ENCODE measurements at regions of chr3 and their contacts with region 1.

Region 1: DNA sequence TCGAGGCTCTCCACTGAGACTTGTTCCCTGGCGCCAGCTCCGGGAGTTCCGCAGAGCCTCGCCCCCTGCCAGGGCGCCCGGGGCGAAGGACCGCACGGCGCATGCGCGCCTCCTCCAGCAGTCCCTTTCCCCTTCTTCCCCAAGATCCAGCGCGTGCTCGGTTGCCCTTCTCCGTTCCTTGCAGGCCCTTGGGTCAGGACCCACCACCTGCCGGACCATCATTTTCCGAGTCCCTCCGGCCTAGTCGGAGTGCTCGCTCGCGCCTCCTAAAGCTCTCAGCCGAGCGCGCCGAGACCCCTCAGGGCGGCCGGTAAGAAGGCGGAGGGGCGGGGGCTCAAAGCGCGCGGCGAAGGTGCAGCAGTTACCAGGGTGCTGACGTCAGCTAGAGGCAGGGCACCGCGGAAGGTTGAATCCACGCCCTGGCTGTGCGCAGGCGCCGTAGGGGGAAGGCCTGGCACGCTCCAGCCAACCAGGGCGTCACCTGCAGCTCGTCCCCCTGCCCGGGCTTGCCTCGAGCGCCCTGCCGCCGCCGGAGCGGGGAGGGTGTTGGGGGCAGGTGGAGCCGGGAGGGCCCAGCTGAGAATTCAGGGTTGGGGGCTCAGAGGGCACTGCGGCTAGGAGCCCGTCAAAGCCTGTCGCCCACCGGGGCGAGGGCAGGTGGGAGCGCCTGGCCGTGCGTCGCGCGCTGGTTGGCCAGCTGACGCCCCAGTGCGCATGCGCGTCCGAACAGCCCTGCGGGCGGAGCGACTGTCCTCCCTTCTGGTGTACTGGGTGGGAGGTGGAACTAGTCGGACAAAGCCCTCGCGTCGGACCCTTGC is at the start of gene TCAIM:
- DNase-seq: peak; percentile 99
- ATAC-seq: peak; percentile 98
- H3K4me3 Mint-ChIP-seq: peak within 1 kb of the TSS; percentile 90
- H3K27ac Mint-ChIP-seq: peak within 1 kb of the TSS; percentile 98
- H3K4me1 Mint-ChIP-seq: peaks cover 18% of the 10 kb centered on the region
- H3K27me3 Mint-ChIP-seq: peaks cover 3% of the 10 kb centered on the region
- total RNA-seq, gene TCAIM: 14.8 to 17.0 TPM

Region 2: GRCh38 chr3:42804106-42804830 is 1534.0 kb before region 1 on chr3 and contains the start of gene HIGD1A:
- CTCF ChIA-PET with region 1: no interaction called
- POLR2A ChIA-PET with region 1: no interaction called
- intact Hi-C with region 1: loop called in 1 of 2 experiments (anchors 1 kb)
- DNase-seq: peak; percentile 97
- ATAC-seq: peak; percentile 99
- H3K4me3 Mint-ChIP-seq: peak within 1 kb of the TSS; percentile 91
- H3K27ac Mint-ChIP-seq: peak within 1 kb of the TSS; percentile 86
- H3K4me1 Mint-ChIP-seq: peaks cover 41% of the 10 kb centered on the region
- H3K27me3 Mint-ChIP-seq: peaks cover 6% of the 10 kb centered on the region
- total RNA-seq, gene HIGD1A: 74.9 to 77.8 TPM

Region 3: GRCh38 chr3:43690400-43691119 is 647.7 kb before region 1 on chr3 and contains the start of gene ABHD5:
- CTCF ChIA-PET with region 1: no interaction called
- POLR2A ChIA-PET with region 1: no interaction called
- intact Hi-C with region 1: loop called in 1 of 2 experiments (anchors 2 kb)
- DNase-seq: peak; percentile 95
- ATAC-seq: peak; percentile 90
- H3K4me3 Mint-ChIP-seq: peak within 1 kb of the TSS; percentile 72
- H3K27ac Mint-ChIP-seq: peak within 1 kb of the TSS; percentile 75
- H3K4me1 Mint-ChIP-seq: peaks cover 36% of the 10 kb centered on the region
- H3K27me3 Mint-ChIP-seq: peaks cover 4% of the 10 kb centered on the region
- total RNA-seq, gene ABHD5: 8.6 to 9.8 TPM

Region 4: GRCh38 chr3:44264146-44264545 is 74.1 kb before region 1 on chr3:
- CTCF ChIA-PET with region 1: no interaction called
- POLR2A ChIA-PET with region 1: no interaction called
- intact Hi-C with region 1: no loop called
- DNase-seq: no peak
- ATAC-seq: no peak
- H3K4me3 Mint-ChIP-seq: no peak overlapping the region
- H3K27ac Mint-ChIP-seq: no peak overlapping the region
- H3K4me1 Mint-ChIP-seq: peaks cover 6% of the 10 kb centered on the region
- H3K27me3 Mint-ChIP-seq: peaks cover 10% of the 10 kb centered on the region

Region 5: GRCh38 chr3:44477312-44478030 is 139.3 kb after region 1 on chr3 and contains the start of gene ZNF445:
- CTCF ChIA-PET with region 1: no interaction called
- POLR2A ChIA-PET with region 1: no interaction called
- intact Hi-C with region 1: loop called in 1 of 2 experiments (anchors 1 kb)
- DNase-seq: peak; percentile 87
- ATAC-seq: peak; percentile 89
- H3K4me3 Mint-ChIP-seq: peak within 1 kb of the TSS; percentile 75
- H3K27ac Mint-ChIP-seq: peak within 1 kb of the TSS; percentile 88
- H3K4me1 Mint-ChIP-seq: peaks cover 33% of the 10 kb centered on the region
- H3K27me3 Mint-ChIP-seq: no peaks in the 10 kb centered on the region
- total RNA-seq, gene ZNF445: 13.2 to 16.3 TPM

Region 6: GRCh38 chr3:44761424-44762169 is 423.4 kb after region 1 on chr3 and contains the starts of genes KIAA1143 and KIF15:
- CTCF ChIA-PET with region 1: no interaction called
- POLR2A ChIA-PET with region 1: no interaction called
- intact Hi-C with region 1: loop called in 1 of 2 experiments (anchors 1 kb)
- DNase-seq: peak; percentile 99
- ATAC-seq: peak; percentile 94
- H3K4me3 Mint-ChIP-seq: peak within 1 kb of the TSS; percentile 88
- H3K27ac Mint-ChIP-seq: peak within 1 kb of the TSS; percentile 89
- H3K4me1 Mint-ChIP-seq: peaks cover 24% of the 10 kb centered on the region
- H3K27me3 Mint-ChIP-seq: no peaks in the 10 kb centered on the region
- total RNA-seq, gene KIAA1143: 40.2 to 74.1 TPM
- total RNA-seq, gene KIF15: 40.1 to 51.7 TPM

Region 7: DNA sequence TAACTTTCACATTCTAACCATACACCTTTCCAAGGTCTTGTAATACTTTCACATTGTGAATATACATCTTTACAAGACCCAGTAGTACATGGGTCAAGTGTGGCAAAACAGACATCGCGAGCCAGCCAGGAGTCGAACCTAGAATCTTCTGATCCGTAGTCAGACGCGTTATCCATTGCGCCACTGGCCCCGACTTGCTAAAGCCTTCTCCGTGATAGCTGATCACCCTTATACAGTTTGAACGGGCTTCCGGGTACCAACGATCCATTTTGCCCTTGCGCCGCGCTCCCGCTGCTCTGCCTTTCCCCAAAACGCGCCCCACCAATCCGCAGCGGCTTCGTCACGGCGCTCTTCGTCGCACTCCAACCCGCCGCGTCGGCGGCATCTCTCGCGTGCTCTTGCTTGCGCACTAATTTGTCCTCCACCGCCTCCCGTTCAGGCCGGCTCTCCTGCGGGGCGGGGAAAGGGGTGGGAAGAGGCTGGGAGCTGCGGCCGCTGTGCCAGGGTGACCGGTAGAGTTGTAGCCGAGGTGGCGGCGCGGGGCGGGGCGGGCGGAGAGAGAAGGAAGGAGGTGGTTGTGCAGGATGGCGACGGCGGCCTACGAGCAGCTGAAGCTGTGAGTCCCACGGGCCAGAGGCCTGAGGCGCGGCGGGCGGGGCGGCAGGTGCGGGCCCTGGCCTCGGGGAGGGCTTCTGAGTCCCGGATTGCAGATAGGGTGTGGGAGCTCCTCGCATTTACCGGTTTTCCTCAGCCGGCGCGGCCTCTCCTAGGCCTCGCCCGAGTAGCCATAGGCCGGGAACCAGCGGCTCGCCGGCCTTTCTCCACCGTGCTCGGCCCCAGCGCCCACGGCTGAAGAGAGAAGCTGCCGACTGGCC is 1350.9 kb after region 1 on chr3 and contains the start of gene SACM1L:
- CTCF ChIA-PET with region 1: no interaction called
- POLR2A ChIA-PET with region 1: no interaction called
- intact Hi-C with region 1: loop called in 1 of 2 experiments (anchors 1 kb)
- DNase-seq: peak; percentile 98
- ATAC-seq: peak; percentile 85
- H3K4me3 Mint-ChIP-seq: peak within 1 kb of the TSS; percentile 79
- H3K27ac Mint-ChIP-seq: peak within 1 kb of the TSS; percentile 97
- H3K4me1 Mint-ChIP-seq: peaks cover 46% of the 10 kb centered on the region
- H3K27me3 Mint-ChIP-seq: peaks cover 2% of the 10 kb centered on the region
- total RNA-seq, gene SACM1L: 34.2 to 51.8 TPM

Measured in activated CD4-positive, alpha-beta T cell treated with anti-CD3 and anti-CD28 coated beads for 36 hours (primary cell).